CD8-positive, alpha-beta memory T cell (primary cell): ENCODE measurements at regions of chr17 and their contacts with region 1.

Region 1: DNA sequence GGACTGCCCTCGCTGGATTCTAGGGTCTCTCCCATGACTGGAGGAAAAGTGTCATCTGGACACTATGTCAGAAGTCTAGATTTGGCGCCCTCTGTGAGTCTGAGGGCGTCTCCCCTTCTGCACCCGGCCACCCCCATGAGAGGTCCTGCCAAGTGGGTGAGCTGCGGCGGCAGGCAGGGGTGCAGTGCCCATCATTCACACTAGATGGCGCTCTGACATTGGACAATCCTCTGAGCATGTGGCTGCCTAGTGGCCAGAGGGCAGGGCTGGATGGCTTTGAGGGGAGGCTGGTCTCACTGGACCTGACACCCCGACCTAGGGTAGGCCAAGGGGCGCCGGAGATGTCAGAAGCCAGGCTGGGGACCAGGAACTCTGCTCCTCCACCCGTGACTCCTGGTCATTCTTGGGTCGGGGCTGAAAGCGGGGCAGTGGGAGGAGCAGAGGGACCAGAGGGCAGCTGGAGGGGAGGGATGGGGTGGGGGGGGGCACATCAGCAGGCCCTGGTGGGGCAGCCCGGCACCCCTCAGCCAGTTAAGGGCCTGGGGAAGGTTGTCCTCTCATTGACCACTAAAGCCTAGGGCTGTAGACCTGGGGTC is 28.0 kb downstream of the MRM1 start:
- DNase-seq: peak; percentile 63 to 82 (median 70)
- H3K4me3 ChIP-seq: no peak overlapping the region
- H3K4me3 Mint-ChIP-seq: no peak overlapping the region
- H3K27ac ChIP-seq: no peak overlapping the region
- H3K27ac Mint-ChIP-seq: peak overlapping the region in 1 of 8 donors; percentile 30
- H3K4me1 ChIP-seq: no peaks in the 10 kb centered on the region
- H3K4me1 Mint-ChIP-seq: peaks cover 0 to 1% (median 0%) of the 10 kb centered on the region in 3 donors
- H3K27me3 ChIP-seq: no peaks in the 10 kb centered on the region
- H3K27me3 Mint-ChIP-seq: peaks cover 17 to 22% of the 10 kb centered on the region in 2 donors

Region 2: DNA sequence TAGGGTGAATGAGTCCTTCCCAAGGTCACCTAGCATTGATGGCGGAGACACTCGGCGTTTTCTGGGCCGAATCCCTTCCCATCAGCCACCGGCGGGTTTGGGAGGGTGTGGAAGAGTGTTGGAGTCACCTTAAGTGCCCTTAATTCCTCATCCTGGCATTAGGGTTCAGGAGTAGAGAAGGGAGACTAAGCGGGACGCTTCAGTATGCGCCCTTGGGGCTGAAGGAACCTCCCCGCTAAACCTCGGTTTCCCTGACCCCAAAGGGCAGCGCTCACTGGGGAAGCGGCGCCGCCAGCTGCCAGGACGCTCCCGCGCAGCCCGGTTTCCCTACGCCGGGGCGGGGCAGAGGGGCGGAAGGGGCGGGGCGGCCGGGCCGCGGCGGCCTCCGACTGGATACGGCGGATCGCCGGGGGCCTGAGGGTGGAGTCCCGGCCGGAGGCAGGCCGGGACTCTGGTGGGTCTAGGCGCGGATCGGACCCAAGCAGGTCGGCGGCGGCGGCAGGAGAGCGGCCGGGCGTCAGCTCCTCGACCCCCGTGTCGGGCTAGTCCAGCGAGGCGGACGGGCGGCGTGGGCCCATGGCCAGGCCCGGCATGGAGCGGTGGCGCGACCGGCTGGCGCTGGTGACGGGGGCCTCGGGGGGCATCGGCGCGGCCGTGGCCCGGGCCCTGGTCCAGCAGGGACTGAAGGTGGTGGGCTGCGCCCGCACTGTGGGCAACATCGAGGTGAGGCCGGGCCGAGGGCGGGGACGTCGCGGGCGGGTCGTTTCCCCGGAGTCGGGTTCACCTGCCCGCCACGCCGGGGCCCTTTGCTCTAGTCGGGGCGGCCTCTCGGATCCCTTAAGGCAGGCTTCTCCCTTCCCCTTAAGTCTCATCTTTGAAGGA is 37.7 kb before region 1 on chr17 and contains the start of gene DHRS11:
- CTCF ChIA-PET with region 1: no interaction called
- POLR2A ChIA-PET with region 1: no interaction called
- DNase-seq: peak; percentile 60 to 80 (median 72)
- H3K4me3 ChIP-seq: peak within 1 kb of the TSS; percentile 42
- H3K4me3 Mint-ChIP-seq: peak within 1 kb of the TSS; percentile 70 to 87 (median 75)
- H3K27ac ChIP-seq: peak within 1 kb of the TSS; percentile 28
- H3K27ac Mint-ChIP-seq: peak within 1 kb of the TSS; percentile 43 to 92 (median 76)
- H3K4me1 ChIP-seq: peaks cover 10% of the 10 kb centered on the region
- H3K4me1 Mint-ChIP-seq: peaks cover 15 to 33% (median 32%) of the 10 kb centered on the region in 3 donors
- H3K27me3 ChIP-seq: no peaks in the 10 kb centered on the region
- H3K27me3 Mint-ChIP-seq: no peaks in the 10 kb centered on the region
- total RNA-seq, gene DHRS11: 11.1 to 13.0 TPM

Region 3: DNA sequence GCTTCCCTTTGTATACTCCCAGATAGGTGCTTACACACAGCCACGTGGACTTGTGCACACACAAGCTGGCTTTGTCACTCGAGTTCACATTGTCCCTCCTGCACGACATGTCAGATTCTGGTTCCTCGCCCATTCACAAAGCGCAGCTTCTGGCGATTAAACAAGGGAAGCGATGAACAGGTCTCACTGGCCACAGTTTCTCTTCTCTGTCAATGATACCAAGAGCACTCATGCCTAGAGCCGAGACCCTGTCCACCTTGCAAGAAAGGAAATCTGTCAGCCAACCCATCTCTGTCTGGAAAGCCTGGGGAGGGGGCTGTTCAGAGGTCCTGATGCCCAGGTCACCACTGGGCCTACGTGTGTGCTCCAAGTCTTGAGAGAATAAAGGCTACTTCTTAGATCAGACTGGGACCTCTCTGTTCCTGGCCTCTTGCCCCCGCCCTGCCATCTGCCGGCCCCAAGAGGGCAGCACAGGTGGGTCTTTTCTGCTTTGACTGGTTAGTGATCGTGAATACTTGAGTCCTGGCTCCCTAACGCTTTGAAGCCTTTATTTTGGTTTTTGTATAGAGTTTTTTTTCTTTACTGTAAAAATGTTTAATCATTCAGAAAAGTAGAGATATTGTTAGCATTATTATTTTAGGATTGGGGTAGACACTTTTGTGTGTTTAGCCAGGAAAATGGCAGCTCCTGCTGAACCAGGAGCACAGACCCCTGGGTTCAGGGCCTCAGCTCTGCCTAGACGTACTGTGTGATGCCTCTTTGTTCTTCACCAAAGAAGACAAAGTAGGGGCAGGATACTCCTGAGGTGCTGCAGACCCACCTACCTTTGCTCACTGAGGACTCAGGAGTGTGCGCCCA is 76.8 kb after region 1 on chr17:
- CTCF ChIA-PET with region 1: interaction called, 10 read pairs
- POLR2A ChIA-PET with region 1: no interaction called
- DNase-seq: peak; percentile 17 to 62 (median 20)
- H3K4me3 ChIP-seq: no peak overlapping the region
- H3K4me3 Mint-ChIP-seq: no peak overlapping the region
- H3K27ac ChIP-seq: no peak overlapping the region
- H3K27ac Mint-ChIP-seq: no peak overlapping the region
- H3K4me1 ChIP-seq: no peaks in the 10 kb centered on the region
- H3K4me1 Mint-ChIP-seq: peaks cover 0 to 4% (median 0%) of the 10 kb centered on the region in 3 donors
- H3K27me3 ChIP-seq: peaks cover 12% of the 10 kb centered on the region
- H3K27me3 Mint-ChIP-seq: peaks cover 16 to 43% of the 10 kb centered on the region in 2 donors

Region 4: GRCh38 chr17:36777118-36777517 is 147.8 kb after region 1 on chr17:
- CTCF ChIA-PET with region 1: no interaction called
- POLR2A ChIA-PET with region 1: no interaction called
- DNase-seq: no peak
- H3K4me3 ChIP-seq: no peak overlapping the region
- H3K4me3 Mint-ChIP-seq: no peak overlapping the region
- H3K27ac ChIP-seq: no peak overlapping the region
- H3K27ac Mint-ChIP-seq: no peak overlapping the region
- H3K4me1 ChIP-seq: no peaks in the 10 kb centered on the region
- H3K4me1 Mint-ChIP-seq: no peaks in the 10 kb centered on the region
- H3K27me3 ChIP-seq: peaks cover 4% of the 10 kb centered on the region
- H3K27me3 Mint-ChIP-seq: peaks cover 24 to 60% of the 10 kb centered on the region in 2 donors